ENCODE measurements at regions of chr11 and their contacts with region 1.

Region 1: DNA sequence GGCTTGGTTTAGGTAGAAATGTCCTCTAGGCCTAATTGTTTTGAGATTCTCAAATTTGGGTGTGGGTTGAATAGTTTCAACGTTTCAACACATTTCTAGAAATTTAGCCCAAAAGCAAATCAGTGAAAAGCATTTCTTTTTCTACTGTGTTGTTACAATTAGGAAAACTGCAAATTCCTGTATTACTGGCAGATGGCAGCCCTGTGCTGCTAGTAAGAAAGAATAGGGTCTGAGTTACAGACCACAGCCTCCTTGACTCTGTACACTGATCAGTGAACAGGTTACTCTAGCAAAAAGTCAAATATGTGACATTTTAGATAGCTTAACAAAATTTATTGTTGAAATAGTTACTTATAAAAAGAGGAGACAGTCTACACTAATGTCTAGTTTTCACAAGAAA is 703.0 kb downstream of the JRKL start:
- DNase-seq: no peak
- ATAC-seq: no peak
- H3K4me3 ChIP-seq: no peak overlapping the region
- H3K4me3 Mint-ChIP-seq: no peak overlapping the region
- H3K27ac ChIP-seq: no peak overlapping the region
- H3K27ac Mint-ChIP-seq: no peak overlapping the region
- H3K4me1 ChIP-seq: no peaks in the 10 kb centered on the region
- H3K4me1 Mint-ChIP-seq: no peaks in the 10 kb centered on the region
- H3K27me3 ChIP-seq: no peaks in the 10 kb centered on the region
- H3K27me3 Mint-ChIP-seq: no peaks in the 10 kb centered on the region
- CTCF ChIP-seq: no peak

Region 2: DNA sequence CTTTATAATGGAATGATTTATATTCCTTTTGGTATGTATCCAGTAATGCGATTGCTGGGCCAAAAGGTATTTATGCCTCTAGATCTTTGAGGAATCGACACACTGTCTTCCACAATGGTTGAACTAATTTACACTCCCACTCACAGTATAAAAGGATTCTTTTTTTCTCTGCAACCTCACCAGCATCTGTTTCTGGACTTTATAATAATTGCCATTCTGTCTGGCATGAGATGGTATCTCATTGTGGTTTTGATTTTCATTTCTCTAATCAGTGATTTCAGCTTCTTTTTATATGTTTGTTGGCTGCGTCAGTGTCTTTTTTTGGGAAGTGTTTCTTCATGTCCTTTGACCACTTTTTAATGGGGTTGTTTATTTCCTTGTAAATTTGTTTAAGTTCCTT is 23.7 kb before region 1 on chr11:
- CTCF ChIA-PET with region 1: no interaction called
- POLR2A ChIA-PET with region 1: no interaction called
- intact Hi-C with region 1: loop called (anchors 1 kb)
- DNase-seq: no peak
- ATAC-seq: no peak
- H3K4me3 ChIP-seq: no peak overlapping the region
- H3K4me3 Mint-ChIP-seq: no peak overlapping the region
- H3K27ac ChIP-seq: no peak overlapping the region
- H3K27ac Mint-ChIP-seq: no peak overlapping the region
- H3K4me1 ChIP-seq: no peaks in the 10 kb centered on the region
- H3K4me1 Mint-ChIP-seq: no peaks in the 10 kb centered on the region
- H3K27me3 ChIP-seq: no peaks in the 10 kb centered on the region
- H3K27me3 Mint-ChIP-seq: no peaks in the 10 kb centered on the region
- CTCF ChIP-seq: no peak